ENCODE measurements at regions of chr5 and their contacts with region 1.

Region 1: DNA sequence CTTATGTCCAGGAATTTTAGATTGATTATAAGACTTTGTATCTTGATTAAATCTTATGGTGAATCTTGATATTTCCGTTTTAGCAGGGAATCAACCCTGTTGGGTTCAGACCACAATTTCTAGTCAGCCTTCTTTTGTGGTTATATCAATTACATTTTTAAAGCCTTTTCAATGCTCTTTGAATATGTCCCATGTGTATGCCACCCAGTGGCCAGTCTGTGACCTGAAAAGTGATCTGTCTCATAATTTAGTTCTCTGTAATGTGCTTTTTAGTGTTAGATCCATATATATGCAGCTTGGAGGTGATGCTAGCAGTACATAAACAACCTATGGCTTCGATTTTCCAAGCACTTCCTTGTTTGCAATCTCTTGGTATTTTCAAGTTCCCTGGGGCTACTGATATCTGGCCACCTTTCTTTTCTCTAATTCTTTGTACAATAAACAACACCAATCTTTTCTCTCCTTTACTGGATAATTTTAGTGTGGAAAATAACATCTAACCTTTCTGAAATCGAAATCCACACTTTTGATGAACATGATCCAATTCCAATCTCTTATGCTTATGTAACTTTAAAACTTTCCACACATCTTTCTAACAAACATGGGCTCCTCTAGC is 28.8 kb downstream of the PDE8B start:
- DNase-seq: peak in 12 of 42 donors; percentile 9 to 70 (median 28)

Region 2: GRCh38 chr5:77143998-77144836 is 95.0 kb before region 1 on chr5:
- intact Hi-C with region 1: loop called (anchors 10 kb)
- DNase-seq: peak; percentile 72 to 94 (median 84)

Measured in head of caudate nucleus (tissue), 42 donors.